ENCODE measurements at regions of chr3 and their contacts with region 1.

Region 1: GRCh38 chr3:184371570-184372018 is 6.4 kb downstream of the THPO start:
- DNase-seq: peak; percentile 89
- H3K4me3 Mint-ChIP-seq: no peak overlapping the region
- H3K27ac Mint-ChIP-seq: no peak overlapping the region
- H3K4me1 Mint-ChIP-seq: peaks cover 20% of the 10 kb centered on the region
- H3K27me3 Mint-ChIP-seq: peaks cover 19% of the 10 kb centered on the region

Region 2: GRCh38 chr3:184417619-184418327 is 46.2 kb after region 1 on chr3:
- intact Hi-C with region 1: loop called (anchors 5 kb)
- DNase-seq: peak; percentile 89
- H3K4me3 Mint-ChIP-seq: no peak overlapping the region
- H3K27ac Mint-ChIP-seq: no peak overlapping the region
- H3K4me1 Mint-ChIP-seq: no peaks in the 10 kb centered on the region
- H3K27me3 Mint-ChIP-seq: peaks cover 3% of the 10 kb centered on the region

Region 3: DNA sequence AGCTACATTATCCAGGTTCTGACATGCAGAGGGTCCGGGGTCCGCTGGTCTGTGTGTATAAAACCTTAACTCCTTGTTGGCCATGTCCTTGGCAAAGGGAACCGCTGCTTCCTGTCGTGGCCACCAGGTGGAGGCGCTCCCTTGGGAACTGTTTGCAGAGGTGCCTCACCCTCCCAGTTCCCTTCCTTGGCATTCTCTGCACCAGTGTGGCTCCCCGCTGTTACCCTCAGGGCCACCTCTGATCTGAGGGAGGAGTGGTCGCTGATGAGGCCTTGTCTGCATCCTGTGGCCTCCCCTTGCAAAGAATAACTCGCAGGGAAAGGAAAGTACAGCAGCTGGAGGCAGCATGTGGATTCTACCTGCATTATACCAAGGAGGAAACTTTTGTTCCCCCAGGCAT is 97.8 kb after region 1 on chr3:
- intact Hi-C with region 1: loop called (anchors 5 kb)
- DNase-seq: peak; percentile 71
- H3K4me3 Mint-ChIP-seq: no peak overlapping the region
- H3K27ac Mint-ChIP-seq: no peak overlapping the region
- H3K4me1 Mint-ChIP-seq: peaks cover 8% of the 10 kb centered on the region
- H3K27me3 Mint-ChIP-seq: peaks cover 28% of the 10 kb centered on the region